CD8-positive, alpha-beta T cell (primary cell): ENCODE measurements at regions of chr3 and their contacts with region 1.

Region 1: GRCh38 chr3:141519587-141519986 is 32.8 kb downstream of the RASA2 start:
- DNase-seq: no peak
- ATAC-seq: no peak
- H3K4me3 ChIP-seq: no peak overlapping the region
- H3K4me3 Mint-ChIP-seq: peak overlapping the region; percentile 35
- H3K27ac ChIP-seq: no peak overlapping the region
- H3K27ac Mint-ChIP-seq: peak overlapping the region; percentile 56
- H3K4me1 ChIP-seq: peaks cover 27% of the 10 kb centered on the region
- H3K4me1 Mint-ChIP-seq: peaks cover 63% of the 10 kb centered on the region
- H3K27me3 ChIP-seq: no peaks in the 10 kb centered on the region
- H3K27me3 Mint-ChIP-seq: no peaks in the 10 kb centered on the region
- CTCF ChIP-seq: no peak

Region 2: GRCh38 chr3:141507392-141508066 is 12.1 kb before region 1 on chr3:
- CTCF ChIA-PET with region 1: no interaction called
- POLR2A ChIA-PET with region 1: interaction called, 5 read pairs
- intact Hi-C with region 1: loop called in 1 of 2 experiments (anchors 2 kb)
- DNase-seq: peak in 1 of 9 experiments; percentile 32
- ATAC-seq: peak; percentile 57
- H3K4me3 ChIP-seq: peak overlapping the region in 1 of 2 experiments; percentile 9
- H3K4me3 Mint-ChIP-seq: peak overlapping the region; percentile 51
- H3K27ac ChIP-seq: peak overlapping the region in 1 of 2 experiments; percentile 4
- H3K27ac Mint-ChIP-seq: peak overlapping the region; percentile 87
- H3K4me1 ChIP-seq: peaks cover 91% of the 10 kb centered on the region
- H3K4me1 Mint-ChIP-seq: peaks cover 54% of the 10 kb centered on the region
- H3K27me3 ChIP-seq: no peaks in the 10 kb centered on the region
- H3K27me3 Mint-ChIP-seq: no peaks in the 10 kb centered on the region
- CTCF ChIP-seq: no peak